ENCODE measurements at regions of chr2 and their contacts with region 1.

Region 1: GRCh38 chr2:178480227-178481181 is at the start of gene PLEKHA3:
- DNase-seq: peak in 1 of 2 donors; percentile 96
- H3K4me3 ChIP-seq: peak within 1 kb of the TSS; percentile 78 to 84
- H3K27ac ChIP-seq: peak within 1 kb of the TSS; percentile 96
- H3K4me1 ChIP-seq: peaks cover 67% of the 10 kb centered on the region
- H3K27me3 ChIP-seq: no peaks in the 10 kb centered on the region
- CTCF ChIP-seq: no peak
- POLR2A ChIP-seq: peak; percentile 19 to 64
- total RNA-seq, gene PLEKHA3: 5.9 TPM

Region 2: DNA sequence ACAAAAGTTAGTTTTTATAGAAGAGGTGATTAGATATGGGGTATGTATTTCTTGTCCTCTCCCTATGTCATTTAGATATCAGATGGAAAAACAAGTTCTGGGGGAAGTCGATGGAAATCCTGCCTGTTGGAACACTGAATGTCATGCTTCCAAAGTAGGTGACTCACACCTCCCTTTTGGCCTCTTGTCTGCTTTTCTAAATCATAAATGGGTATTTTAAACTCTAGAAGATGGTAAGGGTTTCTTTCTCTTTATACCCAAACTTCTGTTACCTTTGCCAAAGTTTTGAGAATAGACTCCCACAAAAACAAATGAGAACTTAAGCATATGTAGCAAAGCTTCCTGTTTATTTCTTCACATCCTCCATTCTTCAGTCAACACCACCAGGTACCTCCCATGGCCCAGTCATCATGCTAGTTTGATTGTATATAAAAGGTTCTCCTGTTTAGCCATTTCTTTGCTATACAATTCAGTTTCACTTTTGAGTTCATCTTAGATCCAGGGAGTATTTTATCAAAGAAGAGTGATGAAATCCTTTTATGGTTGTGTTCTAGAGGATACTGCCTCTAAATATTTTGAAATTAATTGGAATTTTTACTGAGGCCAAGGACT is 93.4 kb before region 1 on chr2:
- intact Hi-C with region 1: no loop called
- DNase-seq: no peak
- H3K4me3 ChIP-seq: no peak overlapping the region
- H3K27ac ChIP-seq: no peak overlapping the region
- H3K4me1 ChIP-seq: no peaks in the 10 kb centered on the region
- H3K27me3 ChIP-seq: no peaks in the 10 kb centered on the region
- CTCF ChIP-seq: no peak
- POLR2A ChIP-seq: no peak

Region 3: DNA sequence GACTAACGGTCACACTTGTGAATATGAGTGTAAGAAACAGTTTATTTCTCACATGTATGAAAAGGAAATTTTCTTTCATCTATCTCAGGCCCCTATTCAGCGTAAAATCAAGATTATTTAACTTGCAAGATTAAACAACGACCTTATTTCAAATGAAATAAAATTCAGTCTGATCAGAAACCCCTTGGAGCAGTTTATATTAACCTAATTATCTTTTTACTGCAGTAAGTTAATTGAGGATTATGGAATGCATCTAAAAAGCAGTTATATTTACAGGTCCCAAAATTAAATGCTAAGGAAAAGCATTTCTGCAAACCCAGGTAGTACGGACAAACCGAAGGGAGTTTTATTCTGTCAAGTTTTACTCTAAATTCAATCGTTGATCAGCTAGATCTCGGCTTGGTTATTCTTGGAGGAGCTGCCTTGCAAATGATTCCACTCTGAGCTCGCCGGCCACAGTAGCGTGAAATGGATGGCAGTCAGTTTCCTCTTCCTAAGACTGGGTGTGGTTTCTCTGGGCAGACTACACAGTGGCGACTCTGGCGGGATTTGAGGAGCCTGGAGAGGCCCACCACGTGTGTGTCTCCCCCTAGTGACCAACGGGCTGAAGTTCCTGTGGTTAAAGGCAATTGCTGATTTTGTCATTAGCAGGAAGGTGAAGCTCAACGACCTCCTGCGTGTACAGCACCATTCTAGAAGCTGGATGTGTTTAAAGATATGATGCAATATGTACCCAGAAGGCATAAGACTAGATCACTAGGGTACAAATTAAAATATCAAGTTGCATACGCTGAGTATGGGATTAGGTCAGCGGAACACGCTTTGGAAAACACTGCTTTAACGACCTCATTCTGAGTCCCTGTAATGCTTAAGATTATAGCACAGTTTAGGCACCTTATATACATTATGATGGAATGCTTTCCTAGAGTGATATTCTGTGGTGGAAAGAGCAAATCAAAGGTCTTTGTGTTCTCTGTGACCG is 65.9 kb before region 1 on chr2:
- intact Hi-C with region 1: no loop called
- DNase-seq: peak in 1 of 2 donors; percentile 97
- H3K4me3 ChIP-seq: peak overlapping the region; percentile 68 to 70
- H3K27ac ChIP-seq: peak overlapping the region; percentile 96
- H3K4me1 ChIP-seq: peaks cover 14% of the 10 kb centered on the region
- H3K27me3 ChIP-seq: no peaks in the 10 kb centered on the region
- CTCF ChIP-seq: peak; percentile 77 to 88 (median 86)
- POLR2A ChIP-seq: peak in 1 of 2 donors; percentile 7

Region 4: DNA sequence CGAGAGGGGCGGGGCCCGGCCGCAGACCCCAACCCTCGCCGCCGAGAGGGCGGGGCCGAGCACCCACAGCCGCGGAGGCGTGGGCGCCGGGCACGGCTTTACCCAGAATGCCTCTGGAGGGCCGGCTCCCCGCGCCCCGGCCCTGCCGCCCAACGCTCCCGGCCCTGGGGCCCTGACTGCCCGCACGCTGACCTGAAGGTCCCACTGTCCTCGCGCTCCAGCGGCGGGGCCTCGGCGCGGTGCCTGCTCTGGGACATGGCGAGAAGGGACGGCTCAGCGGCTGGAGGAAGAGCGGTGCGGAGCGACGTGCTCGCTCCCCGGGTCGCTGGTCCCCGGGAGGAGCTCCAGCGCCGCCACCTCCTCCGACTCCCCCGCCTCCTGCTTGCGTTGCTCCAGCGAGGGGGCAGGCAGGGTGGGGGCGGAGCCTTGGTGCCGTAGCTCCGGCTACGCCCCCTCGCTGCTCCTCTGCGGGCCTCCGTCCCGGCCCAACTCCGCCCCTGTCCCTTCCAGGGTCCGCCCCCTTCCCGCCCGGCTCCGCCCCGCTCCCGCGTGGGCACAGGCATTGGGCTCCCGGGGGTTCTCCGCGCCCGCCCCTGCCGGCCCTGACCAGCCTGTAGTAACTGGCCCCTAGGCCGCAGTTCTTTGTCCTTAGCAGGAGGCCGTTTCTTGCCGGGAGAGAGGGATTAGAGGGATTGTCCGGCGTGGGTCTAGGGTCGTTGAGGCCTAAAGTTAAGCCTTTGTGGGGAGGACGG is 29.6 kb before region 1 on chr2 and contains the starts of genes PJVK and PRKRA:
- intact Hi-C with region 1: loop called (anchors 1 kb)
- DNase-seq: peak in 1 of 2 donors; percentile 97
- H3K4me3 ChIP-seq: peak within 1 kb of the TSS; percentile 62 to 81
- H3K27ac ChIP-seq: peak within 1 kb of the TSS; percentile 91
- H3K4me1 ChIP-seq: peaks cover 34% of the 10 kb centered on the region
- H3K27me3 ChIP-seq: no peaks in the 10 kb centered on the region
- CTCF ChIP-seq: peak in 1 of 3 experiments; percentile 20
- POLR2A ChIP-seq: peak in 1 of 2 donors; percentile 88
- total RNA-seq, gene PJVK: 4.9 TPM
- total RNA-seq, gene PRKRA: 79.3 TPM